ENCODE measurements at regions of chr16 and their contacts with region 1.

Region 1: DNA sequence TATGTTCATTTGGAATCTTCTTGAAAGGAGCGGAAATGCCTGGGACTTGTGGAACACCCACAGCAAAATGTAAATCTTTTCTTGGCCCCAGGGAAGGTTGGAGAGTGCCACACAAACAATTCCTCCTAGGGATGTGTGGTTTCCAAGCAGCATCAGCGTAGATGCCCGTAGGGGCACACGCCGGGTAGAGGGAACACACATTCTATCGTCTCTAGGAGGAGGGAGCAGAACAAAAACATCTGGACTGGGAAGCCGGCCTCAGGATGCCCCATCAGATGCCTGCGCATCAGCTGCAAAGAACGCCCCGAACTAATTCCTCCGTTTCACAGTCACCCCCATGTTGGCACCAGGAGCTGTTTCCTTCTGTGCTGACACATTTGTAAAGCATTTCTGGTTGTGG is 357.9 kb upstream of the ZFHX3 start:
- DNase-seq: no peak
- ATAC-seq: no peak

Region 2: DNA sequence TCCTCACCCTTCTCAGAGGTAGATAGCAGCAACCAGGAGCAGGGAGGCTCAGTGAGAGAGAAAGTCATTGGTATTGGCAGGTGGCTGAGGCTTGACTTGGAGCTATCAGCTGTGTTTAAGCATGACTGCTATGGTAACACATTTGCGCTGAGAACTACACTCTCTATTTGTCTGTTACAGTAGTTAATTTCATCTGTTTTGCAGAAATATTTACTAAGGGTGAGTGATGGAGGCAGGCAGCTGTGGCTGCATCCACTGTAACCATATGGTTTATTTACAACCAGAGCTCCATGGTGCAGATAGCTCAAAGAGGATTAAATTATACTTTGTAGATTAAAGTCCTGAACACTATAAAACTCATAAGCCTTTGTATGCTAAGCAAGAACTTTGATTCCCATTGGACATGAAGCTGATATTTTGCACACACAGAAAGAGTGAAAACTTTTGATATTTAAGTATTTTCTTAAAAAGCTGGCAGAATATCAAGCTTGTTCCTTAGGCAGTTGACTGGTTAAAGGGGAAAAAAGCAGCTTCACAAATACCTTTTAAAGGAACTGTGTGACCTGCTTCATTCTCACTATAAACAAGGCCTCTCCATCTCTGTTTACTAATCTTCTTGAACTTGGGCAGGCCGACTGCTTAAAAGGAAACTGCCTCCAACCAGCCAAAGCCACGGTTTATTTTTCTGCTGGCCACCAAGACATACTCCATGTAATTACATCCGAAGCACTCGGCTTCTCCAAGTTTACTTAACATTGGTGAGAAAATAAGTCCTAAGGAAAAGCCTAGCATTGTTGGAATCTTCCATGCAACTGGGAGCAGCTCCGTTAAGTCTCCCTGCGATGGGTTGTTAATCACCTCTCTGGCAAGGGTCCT is 58.1 kb before region 1 on chr16:
- intact Hi-C with region 1: loop called (anchors 2 kb)
- DNase-seq: no peak
- ATAC-seq: no peak